Activated naive CD4-positive, alpha-beta T cell treated with anti-CD3 and anti-CD28 coated beads for 36 hours (primary cell): ENCODE measurements at regions of chr16 and their contacts with region 1.

Region 1: DNA sequence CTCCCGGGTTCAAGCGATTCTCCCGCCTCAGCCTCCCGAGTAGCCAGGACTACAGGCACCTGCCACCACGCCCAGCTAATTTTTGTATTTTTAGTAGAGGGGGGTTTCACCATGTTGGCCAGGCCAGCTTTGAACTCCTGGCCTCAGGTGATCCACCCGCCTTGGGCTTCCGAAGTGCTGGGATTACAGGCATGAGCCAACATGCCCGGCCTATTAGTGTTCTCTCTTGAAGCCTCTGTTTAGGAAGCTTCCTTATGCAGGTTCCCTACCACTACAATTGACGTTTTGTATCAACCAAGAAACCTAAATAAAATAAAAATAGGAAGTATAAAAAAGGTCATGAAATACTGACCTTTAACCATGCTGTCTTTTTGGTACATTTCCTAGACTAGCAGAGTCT is 16.0 kb downstream of the CHST5 start:
- DNase-seq: no peak
- H3K4me3 Mint-ChIP-seq: no peak overlapping the region
- H3K27ac Mint-ChIP-seq: no peak overlapping the region
- H3K4me1 Mint-ChIP-seq: peaks cover 7% of the 10 kb centered on the region
- H3K27me3 Mint-ChIP-seq: no peaks in the 10 kb centered on the region

Region 2: GRCh38 chr16:75198135-75198600 is 321.7 kb before region 1 on chr16:
- CTCF ChIA-PET with region 1: interaction called, 7 read pairs
- intact Hi-C with region 1: loop called (anchors 2 kb)
- DNase-seq: no peak
- H3K4me3 Mint-ChIP-seq: no peak overlapping the region
- H3K27ac Mint-ChIP-seq: no peak overlapping the region
- H3K4me1 Mint-ChIP-seq: peaks cover 9% of the 10 kb centered on the region
- H3K27me3 Mint-ChIP-seq: peaks cover 13% of the 10 kb centered on the region

Region 3: GRCh38 chr16:75471723-75472633 is 47.9 kb before region 1 on chr16:
- CTCF ChIA-PET with region 1: interaction called, 8 read pairs
- intact Hi-C with region 1: loop called (anchors 1 kb)
- DNase-seq: peak; percentile 56
- H3K4me3 Mint-ChIP-seq: no peak overlapping the region
- H3K27ac Mint-ChIP-seq: no peak overlapping the region
- H3K4me1 Mint-ChIP-seq: peaks cover 1% of the 10 kb centered on the region
- H3K27me3 Mint-ChIP-seq: no peaks in the 10 kb centered on the region

Region 4: DNA sequence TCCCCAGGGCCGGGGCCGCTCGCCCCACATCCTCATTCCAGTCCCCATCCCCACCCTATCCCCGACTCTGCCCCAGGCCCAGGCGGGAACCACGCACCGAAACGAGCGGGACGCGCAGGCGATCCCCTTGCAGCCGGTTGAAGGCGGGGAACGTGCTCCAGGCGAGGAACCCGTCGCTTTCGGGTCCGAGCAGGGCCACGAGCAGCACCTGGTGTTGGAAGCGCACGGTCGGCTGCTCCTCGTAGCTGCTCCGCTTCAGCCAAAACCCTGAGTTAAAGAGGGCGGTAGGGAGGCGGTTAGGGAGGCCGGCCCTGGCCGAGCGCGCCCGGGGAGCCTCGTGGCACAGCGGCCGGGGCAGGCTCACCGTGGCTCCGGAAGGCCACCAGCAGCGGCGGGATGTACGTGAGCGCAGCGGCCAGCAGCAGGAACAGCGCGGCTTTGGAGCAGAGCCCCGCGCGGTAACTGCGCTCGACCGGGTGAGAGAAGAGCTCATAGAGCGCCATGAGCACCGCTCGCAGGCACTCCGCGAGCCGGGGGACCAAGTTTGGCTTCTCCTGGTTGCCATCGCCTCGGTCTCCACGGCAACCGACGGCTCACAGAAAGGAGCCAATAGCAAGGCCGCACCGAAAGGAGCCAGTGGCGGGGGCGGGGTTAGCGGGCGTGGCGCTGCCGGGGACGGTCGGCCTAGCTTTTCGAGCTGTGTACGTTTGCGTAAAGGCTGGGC is 36.0 kb after region 1 on chr16 and contains the start of gene TMEM231:
- CTCF ChIA-PET with region 1: interaction called, 22 read pairs
- intact Hi-C with region 1: loop called (anchors 1 kb)
- DNase-seq: peak; percentile 98
- H3K4me3 Mint-ChIP-seq: peak within 1 kb of the TSS; percentile 87
- H3K27ac Mint-ChIP-seq: peak within 1 kb of the TSS; percentile 77
- H3K4me1 Mint-ChIP-seq: peaks cover 5% of the 10 kb centered on the region
- H3K27me3 Mint-ChIP-seq: peaks cover 8% of the 10 kb centered on the region
- total RNA-seq, gene TMEM231: 4.5 to 5.4 TPM

Region 5: DNA sequence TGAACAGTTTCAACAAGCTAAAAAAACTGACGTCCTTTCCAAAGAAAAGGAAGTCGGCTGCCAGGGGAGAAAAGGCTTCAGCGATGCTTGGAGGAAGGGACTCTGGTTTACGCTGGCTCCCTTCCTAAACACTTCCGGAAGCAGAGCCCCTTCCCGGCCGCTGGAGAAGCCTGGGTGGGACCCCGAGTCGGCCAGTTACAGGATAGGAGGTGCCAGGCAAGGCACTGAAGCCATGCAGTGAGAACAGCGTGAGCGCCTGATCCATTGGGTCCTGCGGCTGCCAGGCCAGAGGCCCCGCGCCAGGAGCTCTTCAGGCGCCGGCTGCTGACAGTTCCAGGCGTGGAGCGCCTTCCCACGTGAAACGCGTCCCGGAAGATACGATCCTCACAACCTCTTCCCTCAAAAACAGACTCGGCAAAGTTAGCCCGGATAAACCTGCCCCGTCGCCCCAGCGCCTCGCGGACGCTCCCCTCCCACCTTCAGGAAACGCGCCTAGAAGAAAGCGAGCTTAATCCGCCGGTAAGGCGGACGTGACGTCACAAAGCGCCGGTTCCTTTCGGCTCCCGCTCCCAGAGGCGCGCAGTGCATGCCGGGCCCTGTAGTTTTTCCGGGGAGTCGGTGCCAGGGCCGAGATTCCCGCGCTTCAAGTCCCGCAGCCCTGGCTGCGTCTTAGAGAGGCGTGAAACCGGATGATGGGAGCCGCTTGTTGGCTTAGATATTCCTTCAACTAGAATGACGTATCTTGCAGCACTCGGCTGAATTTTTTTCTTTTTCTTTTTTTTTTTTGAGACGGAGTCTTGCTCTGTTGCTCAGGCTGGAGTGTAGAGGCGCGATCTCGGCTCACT is 103.1 kb after region 1 on chr16 and contains the start of gene ADAT1:
- CTCF ChIA-PET with region 1: interaction called, 3 read pairs
- intact Hi-C with region 1: loop called (anchors 1 kb)
- DNase-seq: peak; percentile 99
- H3K4me3 Mint-ChIP-seq: peak within 1 kb of the TSS; percentile 95
- H3K27ac Mint-ChIP-seq: peak within 1 kb of the TSS; percentile 95
- H3K4me1 Mint-ChIP-seq: peaks cover 39% of the 10 kb centered on the region
- H3K27me3 Mint-ChIP-seq: no peaks in the 10 kb centered on the region
- total RNA-seq, gene ADAT1: 45.3 to 47.5 TPM

Region 6: DNA sequence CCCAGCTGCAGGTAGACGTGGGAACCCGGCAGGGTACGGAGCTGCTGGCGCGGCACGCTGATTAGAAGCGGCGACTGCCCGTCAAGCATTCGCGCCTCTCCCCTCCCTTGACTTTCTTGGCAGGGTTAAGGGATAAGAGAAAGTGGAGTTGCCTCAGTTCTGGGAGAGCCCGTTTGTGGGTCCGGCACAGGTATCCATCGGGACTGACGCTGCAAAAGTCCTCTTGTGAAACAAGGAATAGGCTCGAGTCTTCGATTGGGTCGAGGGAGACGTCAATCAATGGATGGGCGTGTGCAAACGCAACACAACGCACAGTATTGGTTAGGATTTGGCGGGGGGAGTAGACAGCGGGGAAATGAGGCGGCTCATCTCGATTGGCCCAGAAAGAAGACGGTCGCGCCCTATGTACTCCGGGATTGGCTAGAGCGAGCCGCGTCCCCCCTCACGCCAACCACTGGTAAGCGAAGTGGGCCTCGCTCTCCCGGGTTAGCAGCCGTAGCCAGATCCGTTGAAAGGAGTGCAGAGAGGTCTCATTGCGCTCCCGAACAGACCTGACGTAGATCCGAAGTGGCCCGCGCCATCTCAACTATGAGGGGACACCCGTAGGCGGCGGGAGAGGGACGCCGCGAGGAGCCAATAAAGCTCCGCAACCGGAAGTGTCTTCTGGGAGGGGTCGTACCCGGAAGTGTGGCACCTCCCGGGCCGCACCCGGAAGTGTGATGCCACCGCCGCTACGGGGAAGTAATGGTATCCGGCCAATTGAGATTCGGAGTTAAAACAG is 1670.8 kb after region 1 on chr16 and contains the start of gene MON1B:
- CTCF ChIA-PET with region 1: no interaction called
- intact Hi-C with region 1: loop called (anchors 2 kb)
- DNase-seq: peak; percentile 96
- H3K4me3 Mint-ChIP-seq: peak within 1 kb of the TSS; percentile 82
- H3K27ac Mint-ChIP-seq: peak within 1 kb of the TSS; percentile 99
- H3K4me1 Mint-ChIP-seq: peaks cover 29% of the 10 kb centered on the region
- H3K27me3 Mint-ChIP-seq: no peaks in the 10 kb centered on the region
- total RNA-seq, gene MON1B: 69.6 to 71.0 TPM